ENCODE measurements at regions of chr3 and their contacts with region 1.

Region 1: GRCh38 chr3:59709702-59710553 is 660.1 kb upstream of the CFAP20DC start:
- DNase-seq: no peak
- ATAC-seq: no peak
- H3K4me3 ChIP-seq: no peak overlapping the region
- H3K27ac ChIP-seq: no peak overlapping the region
- H3K4me1 ChIP-seq: no peaks in the 10 kb centered on the region
- H3K27me3 ChIP-seq: peaks cover 45% of the 10 kb centered on the region
- CTCF ChIP-seq: no peak
- POLR2A ChIP-seq: no peak
- RAD21 ChIP-seq: no peak

Region 2: GRCh38 chr3:59759298-59760031 is 49.5 kb after region 1 on chr3:
- CTCF ChIA-PET with region 1: no interaction called
- POLR2A ChIA-PET with region 1: no interaction called
- RAD21 ChIA-PET with region 1: no interaction called
- intact Hi-C with region 1: no loop called
- DNase-seq: no peak
- ATAC-seq: no peak
- H3K4me3 ChIP-seq: no peak overlapping the region
- H3K27ac ChIP-seq: no peak overlapping the region
- H3K4me1 ChIP-seq: no peaks in the 10 kb centered on the region
- H3K27me3 ChIP-seq: peaks cover 40% of the 10 kb centered on the region
- CTCF ChIP-seq: no peak
- POLR2A ChIP-seq: no peak
- RAD21 ChIP-seq: no peak

Region 3: DNA sequence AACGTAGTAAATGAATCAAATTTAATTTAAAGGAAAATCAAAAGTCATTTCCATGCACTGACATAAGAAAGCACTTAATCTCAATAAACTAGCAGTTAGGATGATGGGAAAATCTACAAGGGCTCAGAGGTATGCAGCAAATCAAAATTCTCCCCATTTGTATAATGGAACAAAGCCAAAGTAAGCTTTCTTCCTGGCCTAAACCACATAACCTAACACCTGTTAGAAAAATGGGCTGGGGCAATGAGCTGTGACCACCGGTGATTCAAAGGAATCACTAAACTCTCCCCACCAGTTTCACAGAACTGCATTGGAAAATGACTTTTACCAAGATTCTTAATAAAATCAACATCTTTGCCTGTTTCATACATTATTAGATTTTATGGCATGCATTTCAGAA is 517.0 kb after region 1 on chr3:
- CTCF ChIA-PET with region 1: no interaction called
- POLR2A ChIA-PET with region 1: no interaction called
- RAD21 ChIA-PET with region 1: no interaction called
- intact Hi-C with region 1: loop called (anchors 10 kb)
- DNase-seq: no peak
- ATAC-seq: no peak
- H3K4me3 ChIP-seq: no peak overlapping the region
- H3K27ac ChIP-seq: no peak overlapping the region
- H3K4me1 ChIP-seq: no peaks in the 10 kb centered on the region
- H3K27me3 ChIP-seq: no peaks in the 10 kb centered on the region
- CTCF ChIP-seq: no peak
- POLR2A ChIP-seq: no peak
- RAD21 ChIP-seq: no peak

Measured in HCT116 (cell line).